Left colon (tissue), 2 donors: ENCODE measurements at regions of chr1 and their contacts with region 1.

Region 1: DNA sequence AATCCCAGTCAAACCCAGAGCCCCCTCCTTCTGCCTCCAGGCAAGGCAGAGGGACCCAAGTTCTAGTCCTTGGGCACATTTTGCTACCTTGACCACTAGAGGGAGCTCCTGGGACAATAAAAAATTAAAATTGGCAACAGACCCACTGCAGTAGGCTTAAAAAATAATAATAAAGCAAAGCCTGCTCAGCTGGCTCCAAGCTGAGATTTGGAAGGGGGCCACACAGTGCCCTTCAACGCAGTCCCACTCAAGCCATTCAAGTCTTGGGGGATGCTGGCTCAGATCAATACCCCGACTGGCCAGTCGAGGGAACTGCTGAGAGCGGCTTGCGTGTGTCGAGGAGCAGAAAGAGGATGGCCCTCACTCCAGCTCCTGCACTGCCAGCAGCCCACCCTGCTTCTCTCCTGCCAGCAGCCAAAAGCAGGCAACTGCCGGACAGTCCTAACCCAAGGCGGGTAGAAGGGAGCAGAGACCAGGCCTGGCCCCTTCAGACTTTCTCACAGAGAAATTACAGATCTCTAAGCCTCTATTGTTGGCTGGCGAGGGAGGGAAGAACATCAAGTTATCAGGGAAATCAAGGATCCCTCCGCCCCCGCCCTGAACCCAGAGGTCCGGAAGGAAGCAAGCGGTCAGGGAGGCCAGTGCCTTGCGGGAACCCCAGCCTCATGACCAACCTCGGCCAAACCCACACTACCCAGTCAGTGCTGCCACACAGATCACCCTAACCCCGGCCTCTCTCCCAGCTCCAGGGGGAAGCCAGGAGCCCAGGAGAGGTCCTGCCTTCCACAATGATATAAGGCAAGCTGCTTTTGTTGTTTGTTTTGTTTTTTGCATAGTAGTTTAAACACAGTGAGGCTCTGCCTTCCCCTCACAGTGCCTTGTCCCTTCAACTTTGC is 4.9 kb upstream of the ALDH4A1 start:
- DNase-seq: peak; percentile 48 to 51
- ATAC-seq: no peak

Region 2: GRCh38 chr1:19096036-19096833 is 189.0 kb after region 1 on chr1:
- intact Hi-C with region 1: loop called in 1 of 2 experiments (anchors 5 kb)
- DNase-seq: peak in 1 of 2 donors; percentile 54
- ATAC-seq: peak; percentile 75